Activated B cell treated with CpG ODN at 0.5 μM for 24 hours (primary cell): ENCODE measurements at regions of chr11 and their contacts with region 1.

Region 1: DNA sequence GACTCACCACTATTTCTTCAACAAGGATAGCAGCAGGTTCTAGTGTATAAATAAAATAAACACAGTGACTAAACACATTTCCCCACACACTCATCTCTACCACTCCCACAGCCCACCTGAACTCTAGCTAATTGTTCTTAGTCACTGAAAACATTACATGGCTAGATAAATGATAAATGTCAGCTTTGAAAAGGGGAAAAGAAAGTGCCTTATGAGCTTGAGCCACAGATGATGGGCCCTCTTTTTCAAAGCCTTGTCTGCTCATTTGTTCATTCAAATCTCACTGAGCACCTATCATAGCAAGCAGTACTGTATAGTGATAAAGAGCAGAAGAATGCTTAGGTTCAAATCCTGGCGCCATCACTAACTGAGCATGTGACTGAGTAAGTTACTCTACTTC is 58.3 kb downstream of the SIK3 start:
- DNase-seq: no peak
- ATAC-seq: peak; percentile 47
- H3K4me3 Mint-ChIP-seq: no peak overlapping the region
- H3K27ac Mint-ChIP-seq: peak overlapping the region; percentile 47
- H3K4me1 Mint-ChIP-seq: peaks cover 76% of the 10 kb centered on the region
- H3K27me3 Mint-ChIP-seq: no peaks in the 10 kb centered on the region
- CTCF ChIP-seq: no peak

Region 2: DNA sequence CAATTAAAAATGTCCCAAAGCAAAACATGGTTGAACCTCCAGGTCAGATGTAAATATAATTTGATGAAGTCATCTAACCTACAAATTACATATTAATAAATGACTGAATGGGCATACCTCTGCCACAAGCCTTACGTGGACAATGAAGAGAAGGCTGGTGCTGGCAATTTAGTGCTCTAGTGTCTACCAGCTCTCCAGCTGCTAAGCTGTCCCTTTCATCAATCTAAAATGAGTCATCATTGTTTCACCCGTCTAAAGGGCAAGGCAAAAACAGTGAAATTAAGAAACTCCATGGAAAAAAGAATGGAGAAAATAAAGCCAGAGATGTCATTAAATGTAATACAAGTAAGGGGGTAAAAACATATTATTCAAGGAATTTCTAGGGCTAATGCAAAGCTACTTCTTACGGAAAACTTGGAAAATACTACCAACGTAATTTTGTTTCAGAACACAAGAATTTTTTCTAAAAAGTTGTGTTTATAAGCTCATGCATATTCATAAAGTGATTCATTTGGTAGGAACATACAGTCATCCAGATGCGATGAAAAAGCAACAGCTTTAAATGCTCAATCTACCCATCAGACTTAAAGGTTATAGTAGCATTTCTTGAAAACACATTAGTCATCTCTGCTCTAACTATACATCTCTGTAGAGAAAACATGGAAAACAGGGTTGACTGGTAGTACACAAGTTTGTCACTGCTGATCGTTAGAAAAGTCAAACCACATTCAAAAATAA is 13.1 kb before region 1 on chr11:
- CTCF ChIA-PET with region 1: no interaction called
- POLR2A ChIA-PET with region 1: interaction called, 3 read pairs
- intact Hi-C with region 1: loop called (anchors 2 kb)
- DNase-seq: no peak
- ATAC-seq: peak; percentile 35
- H3K4me3 Mint-ChIP-seq: no peak overlapping the region
- H3K27ac Mint-ChIP-seq: peak overlapping the region; percentile 57
- H3K4me1 Mint-ChIP-seq: peaks cover 84% of the 10 kb centered on the region
- H3K27me3 Mint-ChIP-seq: no peaks in the 10 kb centered on the region
- CTCF ChIP-seq: no peak

Region 3: GRCh38 chr11:117058761-117059261 is 18.9 kb after region 1 on chr11:
- CTCF ChIA-PET with region 1: no interaction called
- POLR2A ChIA-PET with region 1: interaction called, 4 read pairs
- intact Hi-C with region 1: loop called (anchors 2 kb)
- DNase-seq: no peak
- ATAC-seq: no peak
- H3K4me3 Mint-ChIP-seq: no peak overlapping the region
- H3K27ac Mint-ChIP-seq: peak overlapping the region; percentile 9
- H3K4me1 Mint-ChIP-seq: peaks cover 76% of the 10 kb centered on the region
- H3K27me3 Mint-ChIP-seq: no peaks in the 10 kb centered on the region
- CTCF ChIP-seq: no peak